Activated CD4-positive, alpha-beta T cell treated with anti-CD3 and anti-CD28 coated beads, Interleukin-2, amount 10 ng/mL, durations not matched to agents 7 days and 5 days (primary cell): ENCODE measurements at regions of chr9 and their contacts with region 1.

Region 1: DNA sequence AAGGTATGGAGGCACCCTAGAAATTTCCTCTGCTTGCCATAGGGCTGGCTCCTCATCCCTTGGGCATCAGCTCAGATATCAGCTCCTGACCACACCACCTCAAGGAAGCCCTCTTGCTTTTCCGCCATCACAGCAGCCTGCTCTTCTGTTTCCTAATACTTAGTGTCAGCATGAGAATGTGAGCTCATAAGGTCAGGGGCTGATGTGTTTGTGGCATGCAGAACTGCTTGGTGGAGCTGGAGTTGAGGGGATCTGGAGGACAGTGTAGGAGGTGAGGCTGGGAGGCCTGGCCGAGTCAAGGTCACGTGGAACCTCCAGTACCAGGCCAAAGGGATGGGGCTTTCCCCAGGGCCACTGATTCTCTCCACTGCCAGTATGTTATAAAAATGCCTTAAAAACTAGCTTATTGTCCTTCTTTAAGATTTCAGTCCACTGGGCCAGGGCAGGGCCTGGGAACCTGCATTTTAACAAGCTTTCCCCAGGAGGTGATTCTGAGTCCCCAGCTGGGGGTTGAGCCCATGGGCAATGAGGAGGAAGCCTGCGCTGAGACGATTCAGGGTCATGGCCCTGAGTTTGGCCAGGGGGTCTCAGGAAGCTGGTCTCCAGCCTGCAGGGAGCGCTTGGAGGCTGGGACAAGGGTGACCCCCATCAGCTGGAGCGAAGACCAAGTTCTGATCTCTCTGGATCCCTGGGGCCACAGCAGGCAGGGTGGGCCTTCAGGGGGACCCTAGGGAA is 28.6 kb downstream of the DAB2IP start:
- DNase-seq: no peak
- H3K4me3 Mint-ChIP-seq: no peak overlapping the region
- H3K27ac Mint-ChIP-seq: no peak overlapping the region
- H3K4me1 Mint-ChIP-seq: no peaks in the 10 kb centered on the region
- H3K27me3 Mint-ChIP-seq: peaks cover 4% of the 10 kb centered on the region

Region 2: DNA sequence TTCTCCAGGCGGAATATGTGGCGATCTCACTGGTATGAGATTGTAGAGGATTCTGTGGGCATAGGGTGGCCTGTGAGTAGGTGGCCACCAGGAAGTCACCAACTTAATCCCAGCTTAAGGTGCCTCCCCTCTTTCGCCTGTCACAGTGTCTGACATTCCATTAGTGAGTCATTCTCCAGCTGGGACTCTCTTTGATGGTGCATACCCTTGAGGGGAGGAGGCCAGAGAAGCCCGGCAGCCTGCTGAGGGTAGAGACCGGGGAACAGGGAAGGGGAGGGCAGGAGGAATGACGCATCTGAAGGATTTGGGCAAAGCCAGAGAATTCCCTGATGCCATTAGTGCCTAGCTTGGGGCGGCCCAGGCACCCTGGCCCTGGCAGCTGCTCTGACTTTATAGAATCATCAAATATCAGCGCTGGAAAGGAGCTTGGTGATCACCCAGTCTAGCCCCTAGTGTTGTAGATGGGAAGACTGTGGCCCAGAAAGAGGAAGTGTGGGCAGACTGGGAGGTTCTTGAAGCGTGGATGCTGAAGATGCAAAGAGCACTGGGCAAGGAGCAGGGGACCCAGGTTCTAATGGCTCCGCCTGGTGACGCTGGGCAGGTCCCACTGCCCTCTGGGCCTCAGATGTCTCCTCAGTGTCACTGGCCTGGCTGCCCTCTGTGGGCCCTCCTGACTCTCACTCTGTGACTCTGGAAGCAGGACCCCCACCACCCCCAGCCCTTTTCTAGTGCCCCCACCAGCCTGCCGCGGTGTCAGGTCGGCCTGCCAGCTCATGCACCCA is 12.7 kb after region 1 on chr9:
- CTCF ChIA-PET with region 1: interaction called, 15 read pairs
- POLR2A ChIA-PET with region 1: no interaction called
- DNase-seq: no peak
- H3K4me3 Mint-ChIP-seq: no peak overlapping the region
- H3K27ac Mint-ChIP-seq: no peak overlapping the region
- H3K4me1 Mint-ChIP-seq: peaks cover 6% of the 10 kb centered on the region
- H3K27me3 Mint-ChIP-seq: peaks cover 17% of the 10 kb centered on the region